HEK293 (cell line): ENCODE measurements at regions of chr1 and their contacts with region 1.

Region 1: GRCh38 chr1:46747683-46748288 is 28.9 kb upstream of the EFCAB14 start:
- H3K4me3 ChIP-seq: no peak overlapping the region
- H3K27ac ChIP-seq: no peak overlapping the region
- H3K4me1 ChIP-seq: no peaks in the 10 kb centered on the region
- CTCF ChIP-seq: peak; percentile 75

Region 2: GRCh38 chr1:46718727-46719622 is 28.8 kb before region 1 on chr1 and contains the start of gene EFCAB14:
- CTCF ChIA-PET with region 1: no interaction called
- POLR2A ChIA-PET with region 1: no interaction called
- H3K4me3 ChIP-seq: peak within 1 kb of the TSS; percentile 95
- H3K27ac ChIP-seq: peak within 1 kb of the TSS; percentile 65
- H3K4me1 ChIP-seq: peaks cover 3% of the 10 kb centered on the region; the same call in 1 of the 2 replicates
- CTCF ChIP-seq: no peak

Region 3: GRCh38 chr1:46767649-46768282 is 20.0 kb after region 1 on chr1:
- CTCF ChIA-PET with region 1: interaction called, 10 read pairs
- POLR2A ChIA-PET with region 1: no interaction called
- H3K4me3 ChIP-seq: no peak overlapping the region
- H3K27ac ChIP-seq: no peak overlapping the region
- H3K4me1 ChIP-seq: no peaks in the 10 kb centered on the region
- CTCF ChIP-seq: no peak